Activated CD4-positive, alpha-beta memory T cell treated with anti-CD3 and anti-CD28 coated beads for 36 hours (primary cell): ENCODE measurements at regions of chr17 and their contacts with region 1.

Region 1: GRCh38 chr17:32877164-32877764 is 340 bp upstream of the MYO1D start:
- DNase-seq: peak; percentile 95
- H3K4me3 Mint-ChIP-seq: peak overlapping the region; percentile 50
- H3K27ac Mint-ChIP-seq: peak overlapping the region; percentile 76
- H3K4me1 Mint-ChIP-seq: peaks cover 32% of the 10 kb centered on the region
- H3K27me3 Mint-ChIP-seq: no peaks in the 10 kb centered on the region

Region 2: DNA sequence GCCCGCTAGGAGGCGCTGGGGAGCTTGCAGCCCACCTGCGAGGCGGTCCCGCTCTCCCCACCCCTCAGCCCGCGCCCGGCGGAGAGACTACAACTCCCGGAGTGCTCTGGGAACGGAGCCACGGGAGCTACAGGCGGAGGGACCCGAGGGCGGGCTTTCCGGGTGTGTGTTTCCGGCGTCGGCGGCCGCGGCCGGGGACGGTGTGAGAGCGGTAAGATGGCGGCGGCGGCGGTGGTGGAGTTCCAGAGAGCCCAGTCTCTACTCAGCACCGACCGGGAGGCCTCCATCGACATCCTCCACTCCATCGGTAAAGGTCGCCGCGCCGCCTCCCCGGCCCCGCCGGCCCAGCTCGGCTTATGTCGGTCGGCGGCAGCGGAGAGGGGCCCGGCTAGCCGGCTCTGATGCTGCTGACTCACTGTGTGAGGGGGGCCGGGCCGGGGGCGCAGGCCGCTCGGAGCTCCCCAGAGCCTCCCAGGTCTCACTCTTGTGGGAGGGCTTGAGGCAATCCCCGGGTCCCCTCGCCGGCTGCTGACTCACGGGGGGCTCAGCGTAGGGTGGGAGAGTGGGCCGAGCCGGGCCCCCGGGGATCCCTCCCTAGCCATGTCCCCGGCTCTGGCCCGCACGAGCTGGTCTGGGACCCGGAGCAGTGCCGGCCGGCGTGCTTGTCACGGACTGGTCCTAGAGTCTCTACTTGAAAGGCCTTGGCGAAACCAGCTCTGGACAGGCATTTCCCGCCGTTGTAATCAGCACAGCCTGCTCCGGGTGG is 432.8 kb before region 1 on chr17 and contains the start of gene PSMD11:
- CTCF ChIA-PET with region 1: no interaction called
- POLR2A ChIA-PET with region 1: no interaction called
- intact Hi-C with region 1: loop called (anchors 2 kb)
- DNase-seq: peak; percentile 99
- H3K4me3 Mint-ChIP-seq: peak within 1 kb of the TSS; percentile 89
- H3K27ac Mint-ChIP-seq: peak within 1 kb of the TSS; percentile 91
- H3K4me1 Mint-ChIP-seq: peaks cover 49% of the 10 kb centered on the region
- H3K27me3 Mint-ChIP-seq: no peaks in the 10 kb centered on the region
- total RNA-seq, gene PSMD11: 161 to 162 TPM

Region 3: DNA sequence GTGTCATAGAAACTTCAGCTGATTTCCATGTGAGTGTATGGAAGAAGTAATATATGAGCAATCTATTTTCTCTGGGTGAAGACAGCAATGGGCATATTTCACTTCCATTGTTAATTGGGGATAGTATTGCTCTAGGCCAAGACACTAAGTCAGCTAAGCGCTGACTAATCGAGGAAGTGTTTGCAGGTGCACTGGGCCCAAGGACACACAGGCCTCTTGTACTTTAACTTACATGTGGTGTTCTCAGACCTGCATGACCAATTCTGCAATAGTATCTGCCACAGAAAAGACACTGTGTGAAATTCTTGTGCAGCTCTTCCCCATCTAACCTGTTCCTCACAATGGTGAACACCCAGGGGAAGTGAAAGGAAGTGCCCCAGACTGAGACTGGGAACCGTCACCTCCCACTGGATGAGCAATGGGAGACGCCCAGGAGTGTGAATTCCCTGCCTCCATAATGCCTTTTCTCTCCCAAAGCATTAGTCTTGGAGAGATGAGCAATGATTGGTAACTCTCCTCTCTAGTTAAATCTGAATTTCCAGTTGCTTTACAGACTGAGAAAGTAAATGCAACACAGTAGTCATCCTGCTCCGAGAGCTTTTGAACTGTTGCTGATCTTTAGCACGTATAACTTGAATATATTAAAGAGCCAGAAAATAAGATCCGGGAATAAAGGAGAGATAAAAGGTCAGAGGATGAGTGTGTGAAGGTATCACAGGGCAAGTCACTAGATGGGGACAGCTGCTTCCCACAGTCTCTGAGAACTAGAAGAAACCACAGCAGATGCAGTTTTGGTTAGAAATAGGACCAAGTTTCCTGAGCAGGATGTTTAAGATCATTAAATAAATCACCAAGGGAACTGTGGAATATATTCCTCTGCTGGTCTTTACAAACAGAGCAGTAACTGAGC is 307.8 kb before region 1 on chr17:
- CTCF ChIA-PET with region 1: no interaction called
- POLR2A ChIA-PET with region 1: no interaction called
- intact Hi-C with region 1: no loop called
- DNase-seq: no peak
- H3K4me3 Mint-ChIP-seq: no peak overlapping the region
- H3K27ac Mint-ChIP-seq: no peak overlapping the region
- H3K4me1 Mint-ChIP-seq: peaks cover 19% of the 10 kb centered on the region
- H3K27me3 Mint-ChIP-seq: no peaks in the 10 kb centered on the region

Region 4: GRCh38 chr17:32783602-32784001 is 93.7 kb before region 1 on chr17:
- CTCF ChIA-PET with region 1: interaction called, 178 read pairs
- POLR2A ChIA-PET with region 1: interaction called, 5 read pairs
- intact Hi-C with region 1: loop called (anchors 1 kb)
- DNase-seq: no peak
- H3K4me3 Mint-ChIP-seq: no peak overlapping the region
- H3K27ac Mint-ChIP-seq: no peak overlapping the region
- H3K4me1 Mint-ChIP-seq: no peaks in the 10 kb centered on the region
- H3K27me3 Mint-ChIP-seq: no peaks in the 10 kb centered on the region

Region 5: DNA sequence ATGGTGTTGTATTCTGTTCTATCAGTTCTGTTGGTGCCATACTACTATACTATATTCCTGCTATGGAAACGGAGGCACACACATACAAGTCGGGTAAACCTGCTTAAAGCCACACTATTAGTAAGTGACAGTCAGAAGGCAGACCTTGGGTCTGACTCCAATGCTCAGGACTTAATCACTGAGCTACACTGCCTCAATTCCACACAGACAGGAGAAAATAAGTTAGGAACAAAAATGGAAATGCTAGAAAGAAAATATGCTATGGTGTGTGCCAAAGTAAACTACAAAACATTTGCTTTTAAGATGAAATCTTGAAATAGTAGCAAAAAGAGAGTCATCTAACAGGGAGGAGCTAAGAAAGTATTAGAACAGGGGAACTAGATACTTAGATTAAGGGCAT is 48.4 kb before region 1 on chr17:
- CTCF ChIA-PET with region 1: interaction called, 32 read pairs
- POLR2A ChIA-PET with region 1: interaction called, 4 read pairs
- intact Hi-C with region 1: loop called (anchors 5 kb)
- DNase-seq: no peak
- H3K4me3 Mint-ChIP-seq: no peak overlapping the region
- H3K27ac Mint-ChIP-seq: no peak overlapping the region
- H3K4me1 Mint-ChIP-seq: peaks cover 24% of the 10 kb centered on the region
- H3K27me3 Mint-ChIP-seq: peaks cover 13% of the 10 kb centered on the region

Region 6: DNA sequence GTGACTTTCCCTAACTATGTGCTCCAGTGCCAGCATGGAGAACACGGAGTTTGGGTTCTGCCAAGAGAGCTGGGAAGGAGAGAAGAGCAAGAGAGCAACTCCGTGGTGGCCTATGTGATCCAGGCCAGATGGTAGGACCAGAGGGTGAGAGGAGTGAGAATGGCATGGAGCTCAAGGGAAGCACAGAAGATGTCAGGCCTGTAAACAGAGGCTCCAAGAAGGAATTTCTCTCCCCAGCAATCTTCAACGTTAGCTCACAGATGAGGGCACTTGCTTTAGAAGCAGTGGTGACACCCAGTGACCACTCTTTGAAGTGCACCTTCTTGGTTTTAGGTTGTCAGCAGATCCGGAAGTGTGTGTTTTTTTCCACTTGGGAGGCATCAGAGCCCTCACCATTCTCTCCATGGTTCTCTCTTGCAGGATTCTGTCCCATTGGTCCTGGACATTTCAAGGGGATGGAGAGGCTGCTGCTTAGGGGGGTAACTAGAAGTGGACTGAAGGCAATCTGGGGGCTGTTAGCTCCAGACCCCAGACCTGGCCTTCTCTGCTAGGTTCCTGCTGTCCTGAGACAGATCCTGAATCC is 32.6 kb after region 1 on chr17:
- CTCF ChIA-PET with region 1: interaction called, 99 read pairs
- POLR2A ChIA-PET with region 1: interaction called, 10 read pairs
- intact Hi-C with region 1: loop called (anchors 1 kb)
- DNase-seq: peak; percentile 79
- H3K4me3 Mint-ChIP-seq: no peak overlapping the region
- H3K27ac Mint-ChIP-seq: no peak overlapping the region
- H3K4me1 Mint-ChIP-seq: peaks cover 20% of the 10 kb centered on the region
- H3K27me3 Mint-ChIP-seq: peaks cover 20% of the 10 kb centered on the region

Region 7: DNA sequence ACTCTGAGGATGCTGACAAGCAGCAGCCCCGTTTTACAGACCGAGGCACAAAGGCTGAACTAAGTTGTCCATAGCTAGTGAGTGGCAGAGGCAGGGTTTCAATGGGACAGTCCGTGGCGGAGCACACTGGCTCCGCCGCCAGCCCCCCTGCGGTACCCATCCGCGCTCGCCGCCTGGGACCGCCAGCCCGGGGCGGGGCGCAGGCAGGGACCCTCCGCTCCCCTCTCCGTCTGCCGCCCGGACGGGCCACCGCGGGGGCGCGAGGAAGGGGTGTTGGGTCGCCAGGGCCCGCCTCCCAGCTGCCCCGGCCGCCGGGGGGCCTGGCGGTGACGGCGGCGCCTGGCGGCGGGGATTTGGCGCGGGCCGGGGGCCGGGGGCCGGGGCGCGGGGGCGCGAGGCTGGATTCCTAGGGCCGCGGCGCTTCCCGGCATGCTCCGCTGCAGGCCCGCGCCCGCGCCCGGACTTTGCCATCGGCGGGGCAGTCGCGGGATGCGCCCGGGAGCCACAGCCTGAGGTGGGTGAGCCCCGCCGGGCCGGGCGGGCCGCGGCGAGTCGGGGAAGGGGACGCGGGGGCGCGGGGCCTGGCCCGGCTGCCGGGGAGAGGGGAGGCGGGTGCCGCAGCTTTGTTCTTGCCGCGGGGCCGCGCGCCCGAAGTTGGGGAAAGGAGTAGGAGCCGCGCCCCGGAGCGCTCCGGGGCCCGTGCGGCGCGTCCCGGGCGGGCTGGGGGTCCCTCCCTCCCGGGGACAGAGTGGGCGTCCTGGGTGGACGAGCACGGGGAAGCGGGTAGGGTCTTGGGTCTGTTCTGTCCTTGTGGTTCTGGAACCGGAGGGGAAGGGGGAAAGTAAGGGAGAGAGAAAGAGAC is 50.7 kb after region 1 on chr17 and contains the start of gene TMEM98:
- CTCF ChIA-PET with region 1: interaction called, 16 read pairs
- POLR2A ChIA-PET with region 1: no interaction called
- intact Hi-C with region 1: no loop called
- DNase-seq: no peak
- H3K4me3 Mint-ChIP-seq: peak within 1 kb of the TSS; percentile 52
- H3K27ac Mint-ChIP-seq: no peak within 1 kb of the TSS
- H3K4me1 Mint-ChIP-seq: peaks cover 2% of the 10 kb centered on the region
- H3K27me3 Mint-ChIP-seq: peaks cover 37% of the 10 kb centered on the region
- total RNA-seq, gene TMEM98: 1.1 to 2.2 TPM